Posterior vena cava (tissue), 2 donors: ENCODE measurements at regions of chr14 and their contacts with region 1.

Region 1: DNA sequence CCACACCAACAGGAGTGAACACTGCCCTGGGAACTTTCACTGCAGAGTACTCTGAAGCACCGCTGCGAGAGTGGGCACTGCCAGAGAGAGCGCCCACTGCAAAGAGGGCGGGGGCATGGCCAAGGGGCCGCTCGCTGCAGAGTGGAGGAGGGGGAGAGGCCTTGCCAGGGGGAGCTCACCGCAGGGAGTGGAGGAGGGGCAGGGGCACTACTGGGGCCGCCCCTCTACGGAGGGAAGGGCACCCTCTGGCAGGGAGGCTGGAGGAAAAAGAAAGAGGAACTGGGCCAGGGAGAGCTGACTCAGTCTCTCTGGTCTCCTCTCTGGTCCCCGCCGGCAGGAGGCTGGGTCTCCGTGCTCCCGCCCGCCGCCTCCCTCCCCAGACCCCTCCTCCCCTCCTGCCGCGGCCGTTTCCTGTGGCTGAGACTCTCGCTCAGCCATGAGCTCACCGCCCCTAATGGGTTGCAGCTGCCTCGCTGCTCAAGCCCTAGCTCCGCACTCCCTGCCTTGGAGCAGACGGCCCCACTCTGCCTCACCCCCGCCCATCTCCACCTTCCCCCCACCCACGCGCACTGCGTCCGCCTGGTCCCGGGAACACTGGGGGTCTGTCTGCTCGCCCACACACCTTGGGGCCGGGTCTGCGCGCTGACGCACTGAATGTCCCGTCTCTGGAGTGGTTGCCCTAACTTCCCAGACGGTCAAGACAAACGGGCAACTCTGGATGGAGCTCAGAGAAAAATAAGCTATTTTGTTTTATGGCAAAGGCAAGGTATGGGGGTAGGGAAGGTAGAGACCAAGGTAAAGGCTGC is 1.3 kb downstream of the ARHGEF40 start:
- DNase-seq: peak; percentile 97

Region 2: DNA sequence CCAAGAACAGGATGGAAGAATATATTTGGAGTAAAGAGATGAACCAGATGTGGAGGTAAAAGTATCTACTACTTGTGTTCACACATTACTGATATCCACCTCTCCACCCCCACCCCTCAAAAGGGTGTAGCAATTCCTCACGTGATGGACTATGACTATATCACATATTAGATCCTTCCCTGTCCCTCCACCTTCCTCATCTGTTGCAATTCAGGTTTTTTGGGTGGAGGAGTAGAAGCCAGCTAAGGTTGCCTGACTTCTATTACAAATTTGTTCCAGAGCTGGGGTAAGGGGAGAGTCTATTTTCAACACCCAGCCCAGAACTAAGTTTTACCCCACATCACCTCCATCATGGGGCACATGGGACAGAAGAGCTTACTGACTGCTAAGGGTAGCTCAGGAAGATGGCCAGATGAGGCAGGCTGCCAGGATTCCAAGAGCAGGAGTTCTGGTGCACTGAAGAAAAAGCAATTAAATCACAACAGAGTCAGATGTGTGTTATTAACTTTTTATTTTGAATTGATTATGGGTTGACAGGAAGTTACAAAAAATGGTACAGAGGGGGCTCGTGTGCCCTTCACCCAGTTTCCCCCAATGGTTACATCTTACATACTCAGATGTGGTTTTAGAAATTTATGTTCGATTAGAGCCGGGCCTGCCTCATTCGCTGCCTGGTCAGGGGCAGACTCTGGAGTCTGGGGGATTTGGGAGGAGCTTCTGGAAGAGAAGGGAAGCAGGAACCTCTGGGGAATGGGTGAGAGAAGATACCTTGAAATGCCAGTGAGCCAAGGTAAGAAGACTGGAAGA is 38.9 kb before region 1 on chr14:
- intact Hi-C with region 1: loop called in 1 of 2 experiments (anchors 1 kb)
- DNase-seq: no peak

Region 3: GRCh38 chr14:21092273-21093011 is 21.0 kb after region 1 on chr14:
- intact Hi-C with region 1: loop called in 1 of 2 experiments (anchors 2 kb)
- DNase-seq: peak; percentile 97

Region 4: GRCh38 chr14:21104448-21105060 is 33.1 kb after region 1 on chr14:
- intact Hi-C with region 1: loop called (anchors 5 kb)
- DNase-seq: peak; percentile 93

Region 5: DNA sequence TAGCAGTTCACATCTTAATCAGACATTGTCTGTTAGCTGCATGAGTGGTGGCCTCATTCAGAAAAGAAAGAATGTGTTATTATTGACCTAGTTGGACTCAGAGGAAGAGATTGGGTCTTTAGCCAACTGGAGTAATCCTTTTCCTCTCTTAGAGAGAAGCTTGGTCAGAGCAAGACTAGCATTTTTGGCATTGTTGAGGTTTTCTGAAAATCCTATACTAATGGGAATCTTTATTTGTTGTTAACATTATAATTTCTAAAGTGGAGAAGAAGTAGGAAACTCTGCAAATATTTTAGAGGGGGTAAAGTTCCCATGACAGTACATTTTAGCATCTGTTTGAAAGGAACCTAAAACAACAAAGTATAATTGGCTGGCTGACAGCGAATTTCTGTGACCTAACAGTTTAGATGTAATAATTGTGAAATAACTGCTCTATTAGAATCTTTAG is 415.2 kb after region 1 on chr14:
- intact Hi-C with region 1: no loop called
- DNase-seq: no peak